Activated CD4-positive, alpha-beta T cell treated with anti-CD3 and anti-CD28 coated beads for 36 hours (primary cell): ENCODE measurements at regions of chr14 and their contacts with region 1.

Region 1: DNA sequence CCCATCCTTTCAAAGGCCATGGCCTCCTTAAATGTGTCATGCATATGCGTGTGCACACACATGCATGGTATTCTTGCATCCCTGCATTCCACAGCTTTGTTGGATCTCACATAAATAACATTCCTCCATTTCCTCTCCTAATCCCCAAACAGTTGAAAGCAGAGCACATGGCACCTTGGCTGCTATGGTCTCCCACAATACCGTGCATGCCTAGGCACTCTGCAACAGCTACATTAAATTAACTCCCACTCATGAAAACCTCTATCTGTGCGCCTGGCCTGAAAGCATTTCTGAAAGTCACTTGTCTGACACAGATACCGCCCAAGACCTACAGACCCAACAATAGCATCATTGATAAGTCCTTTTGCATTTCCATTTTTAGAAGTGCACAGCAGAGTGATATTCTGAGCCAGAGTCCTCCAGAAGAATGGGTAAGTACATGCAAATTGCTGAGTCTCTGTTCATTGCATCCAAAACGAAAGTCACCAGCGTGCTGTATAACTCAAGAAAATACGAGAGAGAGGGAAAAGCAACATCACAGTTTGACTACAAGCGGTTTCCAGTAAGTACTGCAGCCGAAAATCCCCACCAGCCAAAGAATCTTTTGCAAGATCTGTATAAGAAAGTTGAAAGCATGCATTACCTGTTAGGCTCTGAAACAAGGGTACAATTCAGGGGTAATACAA is 436 bp downstream of the ASB2 start:
- DNase-seq: peak; percentile 69
- ATAC-seq: peak; percentile 51
- H3K4me3 Mint-ChIP-seq: peak overlapping the region; percentile 64
- H3K27ac Mint-ChIP-seq: peak overlapping the region; percentile 97
- H3K4me1 Mint-ChIP-seq: peaks cover 89% of the 10 kb centered on the region
- H3K27me3 Mint-ChIP-seq: no peaks in the 10 kb centered on the region

Region 2: DNA sequence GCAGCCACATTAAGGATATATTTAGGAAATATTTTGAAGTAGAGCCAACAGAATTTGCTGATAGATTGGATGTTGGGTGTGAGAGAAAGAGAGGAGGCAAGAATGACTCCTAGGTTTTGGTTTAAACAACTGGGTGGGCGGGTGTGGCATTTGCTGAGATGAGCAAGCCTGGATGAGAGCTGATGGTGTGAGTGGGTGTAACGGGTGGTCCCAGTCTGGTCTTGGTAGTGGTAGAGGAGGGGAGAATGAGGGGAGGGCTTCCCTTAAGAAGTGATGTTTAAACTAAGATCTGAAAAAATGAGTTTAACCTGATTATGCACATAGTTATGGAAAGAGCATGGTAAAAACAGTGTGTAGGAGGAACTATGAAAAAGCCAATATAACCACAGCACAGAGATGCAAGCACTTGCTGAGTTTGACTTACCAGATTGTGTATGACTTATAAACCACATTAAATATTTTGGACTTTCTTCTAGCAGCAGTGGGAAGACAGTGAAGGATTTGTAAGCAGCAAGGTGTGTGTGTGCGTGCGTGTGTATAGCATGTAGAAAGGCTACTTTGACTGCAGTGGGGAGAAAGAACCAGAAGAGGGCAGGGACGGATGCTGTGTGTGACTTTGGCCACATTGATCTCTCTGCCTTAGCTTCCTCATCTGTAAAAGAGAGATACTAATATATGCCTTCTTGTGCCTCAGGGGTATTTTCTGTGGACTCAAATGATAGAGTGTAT is 327.3 kb before region 1 on chr14:
- CTCF ChIA-PET with region 1: no interaction called
- POLR2A ChIA-PET with region 1: interaction called, 3 read pairs
- intact Hi-C with region 1: loop called in 1 of 2 experiments (anchors 1 kb)
- DNase-seq: peak; percentile 70
- ATAC-seq: peak; percentile 86
- H3K4me3 Mint-ChIP-seq: no peak overlapping the region
- H3K27ac Mint-ChIP-seq: peak overlapping the region; percentile 53
- H3K4me1 Mint-ChIP-seq: peaks cover 21% of the 10 kb centered on the region
- H3K27me3 Mint-ChIP-seq: peaks cover 30% of the 10 kb centered on the region

Region 3: DNA sequence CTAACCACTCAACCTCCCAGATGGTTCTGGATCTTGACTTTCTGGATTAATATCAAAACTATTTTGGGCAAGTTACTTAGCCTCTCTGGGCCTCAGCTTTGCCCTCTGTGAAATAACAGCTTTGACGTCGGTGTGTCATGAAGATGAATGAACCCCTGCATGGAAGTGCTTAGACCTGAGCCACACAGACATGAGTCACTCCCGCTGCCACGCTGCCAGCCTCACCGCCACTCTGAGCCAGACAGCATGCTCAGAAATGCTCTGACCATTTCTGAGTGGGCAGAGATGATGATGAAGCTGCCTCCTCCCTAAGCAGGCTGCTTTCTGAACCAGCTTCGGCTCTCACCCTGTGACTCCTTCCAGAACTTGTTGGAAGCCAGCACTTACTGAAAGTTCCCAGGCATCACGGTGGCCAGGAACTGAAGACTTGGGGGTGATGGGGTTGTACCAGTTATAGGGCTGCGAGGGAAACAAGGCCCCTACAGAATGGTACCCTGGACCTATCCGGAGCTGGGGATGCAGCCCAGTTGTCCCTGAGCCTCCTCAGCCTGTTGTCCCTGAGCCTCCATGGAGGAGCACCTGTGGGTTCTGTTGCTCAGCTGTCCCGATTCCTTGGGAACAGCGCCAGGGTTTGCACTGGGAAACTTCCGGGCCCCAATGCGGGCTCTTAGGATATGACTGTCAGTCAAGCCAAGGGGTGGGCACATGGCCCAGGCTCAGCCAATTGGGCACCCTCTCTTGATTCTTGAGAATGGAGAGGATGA is 19.2 kb after region 1 on chr14:
- CTCF ChIA-PET with region 1: interaction called, 18 read pairs
- POLR2A ChIA-PET with region 1: interaction called, 5 read pairs
- intact Hi-C with region 1: loop called (anchors 1 kb)
- DNase-seq: peak; percentile 87
- ATAC-seq: peak; percentile 92
- H3K4me3 Mint-ChIP-seq: no peak overlapping the region
- H3K27ac Mint-ChIP-seq: peak overlapping the region; percentile 64
- H3K4me1 Mint-ChIP-seq: peaks cover 53% of the 10 kb centered on the region
- H3K27me3 Mint-ChIP-seq: no peaks in the 10 kb centered on the region

Region 4: DNA sequence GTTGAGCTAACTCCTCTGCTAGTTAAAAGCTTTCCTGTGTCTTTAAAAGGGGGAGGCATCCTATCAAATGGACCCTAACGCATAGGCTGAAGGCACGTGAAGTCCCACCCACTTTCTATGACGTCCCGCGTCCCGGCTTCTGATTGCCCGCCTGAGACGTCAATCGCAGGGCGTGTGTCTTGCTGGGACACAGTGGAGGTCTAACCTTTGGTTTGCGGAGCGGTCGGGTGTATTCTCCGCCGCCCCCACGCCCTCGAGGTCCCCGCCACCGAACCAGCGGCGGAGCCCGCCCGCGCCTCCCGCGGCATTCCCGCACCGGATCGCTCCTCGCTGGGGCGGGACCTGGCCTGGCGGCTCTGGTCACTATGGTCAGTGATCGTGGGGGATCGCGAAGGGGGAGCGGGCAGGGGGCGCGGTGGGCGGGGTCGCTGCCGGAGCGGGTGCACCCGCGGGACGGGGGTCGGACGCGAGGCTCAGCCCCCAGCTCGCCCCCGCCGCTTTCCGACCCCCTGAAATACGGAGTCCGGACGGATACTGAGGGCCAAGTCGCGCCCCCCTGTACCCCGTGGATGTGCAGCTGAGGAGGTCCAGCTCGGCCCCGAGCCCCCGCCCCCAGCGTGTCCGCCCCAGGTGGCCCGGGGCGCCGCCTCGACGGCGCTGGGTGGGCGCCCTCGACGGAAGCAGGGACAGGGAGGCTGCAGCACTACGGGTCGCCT is 50.4 kb after region 1 on chr14 and contains the start of gene OTUB2:
- CTCF ChIA-PET with region 1: interaction called, 3 read pairs
- POLR2A ChIA-PET with region 1: no interaction called
- intact Hi-C with region 1: loop called in 1 of 2 experiments (anchors 1 kb)
- DNase-seq: peak; percentile 98
- ATAC-seq: peak; percentile 99
- H3K4me3 Mint-ChIP-seq: peak within 1 kb of the TSS; percentile 54
- H3K27ac Mint-ChIP-seq: no peak within 1 kb of the TSS
- H3K4me1 Mint-ChIP-seq: peaks cover 32% of the 10 kb centered on the region
- H3K27me3 Mint-ChIP-seq: no peaks in the 10 kb centered on the region
- total RNA-seq, gene OTUB2: 0.75 to 0.93 TPM

Region 5: GRCh38 chr14:94342334-94342934 is 366.5 kb after region 1 on chr14:
- CTCF ChIA-PET with region 1: interaction called, 3 read pairs
- POLR2A ChIA-PET with region 1: interaction called, 5 read pairs
- intact Hi-C with region 1: loop called in 1 of 2 experiments (anchors 5 kb)
- DNase-seq: peak; percentile 77
- ATAC-seq: peak; percentile 71
- H3K4me3 Mint-ChIP-seq: no peak overlapping the region
- H3K27ac Mint-ChIP-seq: peak overlapping the region; percentile 93
- H3K4me1 Mint-ChIP-seq: peaks cover 79% of the 10 kb centered on the region
- H3K27me3 Mint-ChIP-seq: peaks cover 2% of the 10 kb centered on the region

Region 6: GRCh38 chr14:94392510-94392935 is 416.6 kb after region 1 on chr14:
- CTCF ChIA-PET with region 1: no interaction called
- POLR2A ChIA-PET with region 1: interaction called, 3 read pairs
- intact Hi-C with region 1: loop called (anchors 5 to 10 kb)
- DNase-seq: peak; percentile 84
- ATAC-seq: peak; percentile 67
- H3K4me3 Mint-ChIP-seq: no peak overlapping the region
- H3K27ac Mint-ChIP-seq: peak overlapping the region; percentile 97
- H3K4me1 Mint-ChIP-seq: peaks cover 70% of the 10 kb centered on the region
- H3K27me3 Mint-ChIP-seq: peaks cover 5% of the 10 kb centered on the region

Region 7: GRCh38 chr14:94761348-94761996 is 785.5 kb after region 1 on chr14:
- CTCF ChIA-PET with region 1: no interaction called
- POLR2A ChIA-PET with region 1: no interaction called
- intact Hi-C with region 1: no loop called
- DNase-seq: no peak
- ATAC-seq: no peak
- H3K4me3 Mint-ChIP-seq: no peak overlapping the region
- H3K27ac Mint-ChIP-seq: no peak overlapping the region
- H3K4me1 Mint-ChIP-seq: no peaks in the 10 kb centered on the region
- H3K27me3 Mint-ChIP-seq: peaks cover 43% of the 10 kb centered on the region